ENCODE measurements at regions of chr2 and their contacts with region 1.

Region 1: GRCh38 chr2:121974897-121975661 is 219.6 kb downstream of the TSN start:
- DNase-seq: peak; percentile 53
- H3K4me3 Mint-ChIP-seq: no peak overlapping the region
- H3K27ac Mint-ChIP-seq: no peak overlapping the region
- H3K4me1 Mint-ChIP-seq: peaks cover 7% of the 10 kb centered on the region
- H3K27me3 Mint-ChIP-seq: no peaks in the 10 kb centered on the region

Region 2: GRCh38 chr2:121736462-121737341 is 238.4 kb before region 1 on chr2 and contains the start of gene NIFK:
- CTCF ChIA-PET with region 1: no interaction called
- intact Hi-C with region 1: loop called (anchors 1 kb)
- DNase-seq: peak; percentile 100
- H3K4me3 Mint-ChIP-seq: peak within 1 kb of the TSS; percentile 90
- H3K27ac Mint-ChIP-seq: peak within 1 kb of the TSS; percentile 93
- H3K4me1 Mint-ChIP-seq: peaks cover 41% of the 10 kb centered on the region
- H3K27me3 Mint-ChIP-seq: no peaks in the 10 kb centered on the region
- total RNA-seq, gene NIFK: 112 to 117 TPM

Region 3: GRCh38 chr2:121810959-121811853 is 163.9 kb before region 1 on chr2:
- CTCF ChIA-PET with region 1: no interaction called
- intact Hi-C with region 1: loop called (anchors 1 kb)
- DNase-seq: peak; percentile 20
- H3K4me3 Mint-ChIP-seq: no peak overlapping the region
- H3K27ac Mint-ChIP-seq: no peak overlapping the region
- H3K4me1 Mint-ChIP-seq: no peaks in the 10 kb centered on the region
- H3K27me3 Mint-ChIP-seq: peaks cover 9% of the 10 kb centered on the region

Region 4: DNA sequence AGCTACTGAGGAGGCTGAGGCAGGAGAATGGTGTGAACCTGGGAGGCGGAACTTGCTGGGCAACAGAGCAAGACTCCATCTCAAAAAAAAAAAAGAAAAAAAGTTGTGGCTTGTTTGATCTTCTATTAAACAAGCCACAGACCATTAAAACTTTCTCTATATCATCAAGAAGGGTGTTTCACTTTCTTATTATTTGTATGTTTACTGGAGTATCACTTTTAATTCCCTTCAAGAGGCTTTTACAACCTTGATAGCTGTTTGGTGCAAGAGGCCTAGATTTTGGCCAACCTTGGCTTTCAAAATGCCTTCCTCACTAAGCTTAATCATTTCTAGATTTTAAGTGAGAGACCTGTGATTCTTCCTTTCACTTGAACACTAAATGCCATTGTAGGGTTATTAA is 119.5 kb after region 1 on chr2:
- CTCF ChIA-PET with region 1: no interaction called
- intact Hi-C with region 1: no loop called
- DNase-seq: no peak
- H3K4me3 Mint-ChIP-seq: no peak overlapping the region
- H3K27ac Mint-ChIP-seq: no peak overlapping the region
- H3K4me1 Mint-ChIP-seq: no peaks in the 10 kb centered on the region
- H3K27me3 Mint-ChIP-seq: peaks cover 3% of the 10 kb centered on the region

Region 5: GRCh38 chr2:122136056-122136455 is 161.0 kb after region 1 on chr2:
- CTCF ChIA-PET with region 1: interaction called, 3 read pairs
- intact Hi-C with region 1: loop called (anchors 1 kb)
- DNase-seq: peak; percentile 37
- H3K4me3 Mint-ChIP-seq: no peak overlapping the region
- H3K27ac Mint-ChIP-seq: no peak overlapping the region
- H3K4me1 Mint-ChIP-seq: no peaks in the 10 kb centered on the region
- H3K27me3 Mint-ChIP-seq: peaks cover 4% of the 10 kb centered on the region

Region 6: GRCh38 chr2:122368576-122369243 is 393.6 kb after region 1 on chr2:
- CTCF ChIA-PET with region 1: no interaction called
- intact Hi-C with region 1: loop called (anchors 5 kb)
- DNase-seq: peak; percentile 5
- H3K4me3 Mint-ChIP-seq: no peak overlapping the region
- H3K27ac Mint-ChIP-seq: no peak overlapping the region
- H3K4me1 Mint-ChIP-seq: no peaks in the 10 kb centered on the region
- H3K27me3 Mint-ChIP-seq: no peaks in the 10 kb centered on the region

Region 7: GRCh38 chr2:122451040-122451439 is 476.0 kb after region 1 on chr2:
- CTCF ChIA-PET with region 1: interaction called, 4 read pairs
- intact Hi-C with region 1: loop called (anchors 1 kb)
- DNase-seq: no peak
- H3K4me3 Mint-ChIP-seq: no peak overlapping the region
- H3K27ac Mint-ChIP-seq: no peak overlapping the region
- H3K4me1 Mint-ChIP-seq: no peaks in the 10 kb centered on the region
- H3K27me3 Mint-ChIP-seq: peaks cover 3% of the 10 kb centered on the region

Region 8: GRCh38 chr2:122737429-122738077 is 762.5 kb after region 1 on chr2:
- CTCF ChIA-PET with region 1: no interaction called
- intact Hi-C with region 1: loop called (anchors 10 kb)
- DNase-seq: no peak
- H3K4me3 Mint-ChIP-seq: no peak overlapping the region
- H3K27ac Mint-ChIP-seq: no peak overlapping the region
- H3K4me1 Mint-ChIP-seq: no peaks in the 10 kb centered on the region
- H3K27me3 Mint-ChIP-seq: no peaks in the 10 kb centered on the region

Measured in activated naive CD4-positive, alpha-beta T cell treated with anti-CD3 and anti-CD28 coated beads for 36 hours (primary cell).